ENCODE measurements at regions of chr15 and their contacts with region 1.

Region 1: DNA sequence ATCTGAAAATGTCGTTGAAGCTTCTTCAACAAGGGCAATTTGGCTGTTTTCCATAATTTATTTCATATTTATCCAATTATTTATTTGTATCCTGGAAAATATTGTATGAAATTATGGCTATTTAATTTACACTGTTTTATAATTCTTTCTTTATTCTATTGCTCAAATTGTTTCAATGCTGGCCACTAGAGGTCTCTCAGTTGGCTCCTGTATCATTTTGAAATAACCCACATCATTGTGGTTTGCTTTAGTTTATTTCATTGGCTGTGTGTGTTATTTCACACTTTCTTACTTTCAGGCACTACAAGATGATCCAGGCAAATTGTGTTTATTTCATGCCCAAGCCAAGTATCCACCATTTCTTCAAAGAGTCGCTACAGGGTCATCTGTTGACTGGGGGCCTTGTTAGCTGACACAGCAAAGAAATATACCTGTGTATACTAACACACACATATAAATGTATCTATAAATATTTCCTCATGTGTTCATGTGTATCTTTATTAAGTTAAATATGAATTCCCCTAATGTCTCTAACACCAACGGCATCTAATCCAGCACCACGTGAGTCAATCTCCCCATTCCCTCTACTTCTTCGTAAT is 86.2 kb downstream of the NPAP1 start:
- DNase-seq: no peak
- H3K4me3 Mint-ChIP-seq: no peak overlapping the region
- H3K27ac Mint-ChIP-seq: no peak overlapping the region
- H3K4me1 Mint-ChIP-seq: no peaks in the 10 kb centered on the region
- H3K27me3 Mint-ChIP-seq: peaks cover 2% of the 10 kb centered on the region

Region 2: DNA sequence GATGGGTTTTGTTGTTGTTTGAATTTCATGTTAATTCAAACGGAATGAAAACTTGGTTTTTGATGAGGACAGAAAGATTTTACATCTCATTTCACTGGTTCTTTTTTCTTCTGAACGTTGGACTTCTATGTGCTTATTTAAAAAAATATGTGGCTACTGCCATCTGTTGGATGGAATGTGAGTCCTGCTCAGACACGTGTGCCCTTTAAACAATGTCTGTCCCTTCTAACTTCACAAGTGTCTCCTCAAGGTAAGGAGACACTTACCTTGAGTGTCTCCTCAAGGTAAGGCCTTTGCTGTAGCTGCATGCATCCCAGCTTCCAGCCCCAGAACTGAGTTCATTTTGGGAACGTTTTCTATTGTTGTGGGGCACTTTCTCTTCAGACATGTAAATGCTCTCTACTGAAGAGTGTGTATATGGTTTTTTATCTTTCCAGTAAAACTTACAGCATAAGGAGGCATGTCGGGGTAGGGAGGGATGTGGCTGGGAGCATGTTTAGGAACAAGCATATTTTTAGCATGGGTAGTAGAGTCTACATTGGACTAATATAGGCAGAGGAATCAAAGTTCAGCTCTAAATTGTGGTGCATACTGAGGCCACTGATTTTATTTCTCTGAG is 740.1 kb after region 1 on chr15:
- CTCF ChIA-PET with region 1: no interaction called
- intact Hi-C with region 1: loop called (anchors 5 kb)
- DNase-seq: peak; percentile 10
- H3K4me3 Mint-ChIP-seq: no peak overlapping the region
- H3K27ac Mint-ChIP-seq: no peak overlapping the region
- H3K4me1 Mint-ChIP-seq: no peaks in the 10 kb centered on the region
- H3K27me3 Mint-ChIP-seq: peaks cover 4% of the 10 kb centered on the region